Panc1 (cell line): ENCODE measurements at regions of chr2 and their contacts with region 1.

Region 1: DNA sequence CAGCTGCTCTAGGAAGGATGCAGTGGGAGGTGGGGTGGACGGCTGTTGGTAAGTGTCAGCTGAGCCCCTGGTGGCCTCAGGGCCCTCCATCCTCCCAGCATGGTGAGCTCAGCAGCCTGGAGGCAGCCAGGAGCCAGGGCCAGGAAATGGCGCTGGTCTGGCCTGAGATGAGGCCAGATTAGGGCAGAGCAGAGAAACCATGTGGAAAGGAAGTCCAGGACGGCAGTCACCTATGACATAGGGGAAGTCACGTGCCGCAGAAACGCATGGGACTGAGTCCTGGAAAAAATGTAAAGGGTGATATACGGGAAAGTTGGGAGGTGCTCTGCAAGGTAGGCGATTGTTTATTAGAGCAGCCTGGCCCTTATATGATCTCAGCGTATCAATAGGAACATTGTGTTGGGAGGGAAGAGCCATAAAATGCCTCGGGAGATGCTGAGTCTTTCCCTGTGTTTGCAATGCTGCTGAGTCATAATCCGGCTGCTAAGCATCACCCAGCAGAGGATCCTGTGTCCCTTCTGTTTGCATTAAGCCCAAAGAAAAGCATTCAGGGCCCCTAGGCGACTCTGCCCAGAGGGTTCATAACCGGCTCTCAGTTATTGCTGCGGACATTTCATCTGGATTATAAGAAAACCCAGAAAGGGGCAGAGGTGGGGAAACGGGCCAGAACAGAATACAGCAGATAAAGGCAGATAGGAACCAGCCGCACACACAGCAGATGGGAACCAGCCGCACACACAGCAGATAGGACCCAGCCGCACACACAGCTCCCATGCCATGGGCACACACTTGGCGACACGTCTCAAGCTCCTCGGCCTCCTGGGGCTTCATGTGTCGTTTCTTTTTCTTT is 30.3 kb upstream of the B3GNT7 start:
- DNase-seq: peak; percentile 82
- ATAC-seq: peak; percentile 89
- H3K4me3 ChIP-seq: peak overlapping the region in 1 of 2 experiments; percentile 27; a peak in 2 of 4 replicates
- H3K27ac ChIP-seq: peak overlapping the region; percentile 97
- H3K4me1 ChIP-seq: peaks cover 65% of the 10 kb centered on the region
- H3K27me3 ChIP-seq: no peaks in the 10 kb centered on the region
- CTCF ChIP-seq: no peak

Region 2: GRCh38 chr2:231138699-231139098 is 226.5 kb before region 1 on chr2:
- CTCF ChIA-PET with region 1: no interaction called
- POLR2A ChIA-PET with region 1: no interaction called
- in situ Hi-C with region 1: no loop called
- intact Hi-C with region 1: no loop called
- DNase-seq: no peak
- ATAC-seq: no peak
- H3K4me3 ChIP-seq: no peak overlapping the region
- H3K27ac ChIP-seq: no peak overlapping the region
- H3K4me1 ChIP-seq: no peaks in the 10 kb centered on the region; the same call in none of the 2 replicates
- H3K27me3 ChIP-seq: no peaks in the 10 kb centered on the region
- CTCF ChIP-seq: no peak

Region 3: GRCh38 chr2:231394211-231395141 is 29.3 kb after region 1 on chr2:
- CTCF ChIA-PET with region 1: interaction called, 4 read pairs
- POLR2A ChIA-PET with region 1: no interaction called
- in situ Hi-C with region 1: no loop called
- intact Hi-C with region 1: loop called (anchors 5 kb)
- DNase-seq: no peak
- ATAC-seq: peak; percentile 29; the same call in 1 of the 2 replicates
- H3K4me3 ChIP-seq: peak overlapping the region in 1 of 2 experiments; percentile 49; a peak in 2 of 4 replicates
- H3K27ac ChIP-seq: peak overlapping the region; percentile 88
- H3K4me1 ChIP-seq: peaks cover 59% of the 10 kb centered on the region
- H3K27me3 ChIP-seq: no peaks in the 10 kb centered on the region
- CTCF ChIP-seq: peak; percentile 75